ENCODE measurements at regions of chr10 and their contacts with region 1.

Region 1: GRCh38 chr10:72719718-72720592 is 28.0 kb downstream of the MCU start:
- DNase-seq: peak; percentile 59 to 89
- H3K4me3 ChIP-seq: no peak overlapping the region
- H3K27ac ChIP-seq: peak overlapping the region; percentile 56
- H3K4me1 ChIP-seq: peaks cover 44% of the 10 kb centered on the region
- H3K27me3 ChIP-seq: no peaks in the 10 kb centered on the region
- CTCF ChIP-seq: no peak

Region 2: DNA sequence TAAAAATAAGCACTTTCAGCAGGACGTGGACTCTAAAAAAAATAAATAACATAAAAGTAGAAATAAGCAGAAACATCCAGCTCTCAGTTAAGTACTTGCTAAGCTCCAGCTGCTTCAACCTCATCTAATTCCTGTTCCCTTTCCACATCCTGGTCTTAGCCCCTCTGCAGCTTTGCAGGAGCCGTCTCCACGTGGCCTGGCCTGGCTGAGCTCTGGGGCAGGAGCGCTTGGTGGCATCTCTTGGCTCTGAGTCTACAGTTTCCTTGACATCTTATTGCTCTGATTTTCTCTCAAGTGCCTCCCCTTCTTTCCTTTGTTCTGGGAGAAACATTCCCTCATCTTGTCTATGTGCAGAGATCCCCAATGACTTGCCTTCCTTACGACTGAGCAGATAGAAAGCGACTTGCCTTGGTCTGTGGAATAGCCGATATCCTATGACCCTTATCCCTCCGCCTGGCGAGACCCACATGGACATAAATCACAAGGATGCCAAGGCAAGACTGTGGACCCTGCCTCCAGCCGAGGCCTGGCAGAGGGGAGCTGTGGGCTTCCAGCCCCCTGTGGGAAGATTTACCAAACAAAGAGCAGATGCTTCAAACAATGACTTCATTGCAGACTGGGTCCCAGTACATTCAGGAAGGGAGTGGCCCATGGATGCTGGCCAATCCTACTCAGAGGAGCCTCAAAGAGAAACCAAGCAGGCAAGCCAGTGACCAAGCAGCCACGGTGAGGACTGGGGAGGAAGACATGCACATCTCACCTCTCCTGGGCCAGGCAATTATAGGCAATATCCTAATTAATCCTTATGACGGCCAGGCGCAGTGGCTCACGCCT is 693.5 kb before region 1 on chr10:
- CTCF ChIA-PET with region 1: no interaction called
- POLR2A ChIA-PET with region 1: no interaction called
- intact Hi-C with region 1: no loop called
- DNase-seq: peak in 1 of 2 experiments; percentile 26
- H3K4me3 ChIP-seq: no peak overlapping the region
- H3K27ac ChIP-seq: no peak overlapping the region
- H3K4me1 ChIP-seq: peaks cover 20% of the 10 kb centered on the region
- H3K27me3 ChIP-seq: no peaks in the 10 kb centered on the region
- CTCF ChIP-seq: no peak

Region 3: GRCh38 chr10:72736176-72736827 is 16.3 kb after region 1 on chr10:
- CTCF ChIA-PET with region 1: no interaction called
- POLR2A ChIA-PET with region 1: interaction called, 17 read pairs
- intact Hi-C with region 1: no loop called
- DNase-seq: peak in 1 of 2 experiments; percentile 81
- H3K4me3 ChIP-seq: no peak overlapping the region
- H3K27ac ChIP-seq: peak overlapping the region; percentile 40
- H3K4me1 ChIP-seq: peaks cover 56% of the 10 kb centered on the region
- H3K27me3 ChIP-seq: no peaks in the 10 kb centered on the region
- CTCF ChIP-seq: no peak

Region 4: GRCh38 chr10:72802763-72803505 is 83.0 kb after region 1 on chr10:
- CTCF ChIA-PET with region 1: no interaction called
- POLR2A ChIA-PET with region 1: no interaction called
- intact Hi-C with region 1: loop called (anchors 5 kb)
- DNase-seq: no peak
- H3K4me3 ChIP-seq: no peak overlapping the region
- H3K27ac ChIP-seq: peak overlapping the region; percentile 50
- H3K4me1 ChIP-seq: peaks cover 38% of the 10 kb centered on the region
- H3K27me3 ChIP-seq: no peaks in the 10 kb centered on the region
- CTCF ChIP-seq: no peak

Measured in PC-9 (cell line).